ENCODE measurements at regions of chr12 and their contacts with region 1.

Region 1: GRCh38 chr12:92987362-92987761 is 58.3 kb upstream of the EEA1 start:
- DNase-seq: no peak
- H3K4me3 Mint-ChIP-seq: no peak overlapping the region
- H3K27ac Mint-ChIP-seq: no peak overlapping the region
- H3K4me1 Mint-ChIP-seq: peaks cover 14% of the 10 kb centered on the region
- H3K27me3 Mint-ChIP-seq: peaks cover 9% of the 10 kb centered on the region

Region 2: GRCh38 chr12:92696216-92696615 is 291.1 kb before region 1 on chr12:
- CTCF ChIA-PET with region 1: no interaction called
- DNase-seq: no peak
- H3K4me3 Mint-ChIP-seq: no peak overlapping the region
- H3K27ac Mint-ChIP-seq: no peak overlapping the region
- H3K4me1 Mint-ChIP-seq: no peaks in the 10 kb centered on the region
- H3K27me3 Mint-ChIP-seq: no peaks in the 10 kb centered on the region

Region 3: GRCh38 chr12:92717202-92717601 is 270.2 kb before region 1 on chr12:
- CTCF ChIA-PET with region 1: no interaction called
- DNase-seq: no peak
- H3K4me3 Mint-ChIP-seq: no peak overlapping the region
- H3K27ac Mint-ChIP-seq: no peak overlapping the region
- H3K4me1 Mint-ChIP-seq: no peaks in the 10 kb centered on the region
- H3K27me3 Mint-ChIP-seq: peaks cover 5% of the 10 kb centered on the region

Region 4: GRCh38 chr12:92784795-92785562 is 202.4 kb before region 1 on chr12:
- CTCF ChIA-PET with region 1: interaction called, 13 read pairs
- DNase-seq: peak; percentile 38
- H3K4me3 Mint-ChIP-seq: no peak overlapping the region
- H3K27ac Mint-ChIP-seq: no peak overlapping the region
- H3K4me1 Mint-ChIP-seq: peaks cover 7% of the 10 kb centered on the region
- H3K27me3 Mint-ChIP-seq: no peaks in the 10 kb centered on the region

Region 5: DNA sequence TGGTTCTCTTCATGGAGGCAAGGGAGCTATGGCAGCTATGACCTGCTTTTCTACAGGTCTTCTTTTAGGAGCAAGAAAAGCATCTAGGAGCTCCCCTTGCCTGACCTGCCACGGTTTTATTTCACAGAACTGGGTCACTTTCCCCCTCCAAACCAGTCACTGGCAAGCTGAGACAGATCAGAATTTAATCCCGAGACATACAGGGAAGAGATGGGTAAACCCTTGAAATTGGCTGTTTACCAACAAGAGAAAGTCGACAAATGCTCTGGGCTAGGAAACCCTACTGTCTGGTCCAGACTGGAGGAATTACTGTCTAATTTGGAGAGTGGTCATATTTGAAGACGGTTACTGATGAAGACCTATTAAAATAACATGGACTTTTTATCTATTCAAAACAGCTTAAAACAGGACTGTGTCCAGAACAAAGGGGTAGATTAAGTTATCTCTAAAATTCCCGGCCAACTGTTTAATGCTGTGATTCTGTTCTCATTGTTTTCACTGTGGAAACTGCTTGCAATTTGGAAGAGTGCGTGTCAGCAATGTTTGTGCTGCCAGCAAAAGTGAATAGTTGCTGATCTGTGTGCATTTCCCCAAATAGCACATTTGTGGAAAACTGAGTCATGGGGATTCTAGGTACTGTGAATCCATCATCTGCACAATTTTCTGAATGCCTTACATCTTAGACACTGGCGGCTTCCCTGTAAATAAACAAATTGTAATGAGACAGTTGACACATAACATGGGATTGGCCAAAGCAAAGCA is 15.1 kb after region 1 on chr12:
- CTCF ChIA-PET with region 1: interaction called, 27 read pairs
- DNase-seq: no peak
- H3K4me3 Mint-ChIP-seq: no peak overlapping the region
- H3K27ac Mint-ChIP-seq: no peak overlapping the region
- H3K4me1 Mint-ChIP-seq: no peaks in the 10 kb centered on the region
- H3K27me3 Mint-ChIP-seq: no peaks in the 10 kb centered on the region

Region 6: GRCh38 chr12:93098077-93098476 is 110.7 kb after region 1 on chr12:
- CTCF ChIA-PET with region 1: interaction called, 16 read pairs
- DNase-seq: peak; percentile 79
- H3K4me3 Mint-ChIP-seq: no peak overlapping the region
- H3K27ac Mint-ChIP-seq: no peak overlapping the region
- H3K4me1 Mint-ChIP-seq: peaks cover 8% of the 10 kb centered on the region
- H3K27me3 Mint-ChIP-seq: no peaks in the 10 kb centered on the region

Region 7: GRCh38 chr12:93200291-93200917 is 213.0 kb after region 1 on chr12:
- CTCF ChIA-PET with region 1: no interaction called
- DNase-seq: no peak
- H3K4me3 Mint-ChIP-seq: no peak overlapping the region
- H3K27ac Mint-ChIP-seq: no peak overlapping the region
- H3K4me1 Mint-ChIP-seq: no peaks in the 10 kb centered on the region
- H3K27me3 Mint-ChIP-seq: peaks cover 17% of the 10 kb centered on the region

Region 8: DNA sequence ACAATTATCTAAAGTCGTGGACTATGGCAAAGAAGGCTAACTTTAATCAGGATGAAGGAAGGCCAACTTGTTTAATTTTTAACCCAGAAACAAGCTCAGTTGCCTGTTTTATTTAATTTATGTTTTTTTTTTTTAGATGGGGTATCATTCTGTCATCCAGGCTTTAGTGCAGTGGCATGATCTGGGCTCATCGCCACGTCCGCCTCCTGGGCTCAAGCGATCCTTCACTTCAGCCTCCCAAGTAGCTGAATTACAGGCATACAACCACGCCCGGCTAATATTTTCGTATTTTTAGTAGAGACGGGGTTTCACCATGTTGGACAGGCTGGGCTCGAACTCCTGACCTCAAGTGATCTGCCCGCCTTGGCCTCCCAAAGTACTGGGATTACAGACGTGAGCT is 410.1 kb after region 1 on chr12:
- CTCF ChIA-PET with region 1: interaction called, 35 read pairs
- DNase-seq: no peak
- H3K4me3 Mint-ChIP-seq: no peak overlapping the region
- H3K27ac Mint-ChIP-seq: no peak overlapping the region
- H3K4me1 Mint-ChIP-seq: no peaks in the 10 kb centered on the region
- H3K27me3 Mint-ChIP-seq: no peaks in the 10 kb centered on the region

Region 9: GRCh38 chr12:93419388-93420034 is 432.1 kb after region 1 on chr12:
- CTCF ChIA-PET with region 1: interaction called, 24 read pairs
- DNase-seq: no peak
- H3K4me3 Mint-ChIP-seq: no peak overlapping the region
- H3K27ac Mint-ChIP-seq: no peak overlapping the region
- H3K4me1 Mint-ChIP-seq: peaks cover 69% of the 10 kb centered on the region
- H3K27me3 Mint-ChIP-seq: no peaks in the 10 kb centered on the region